Gastrocnemius medialis (tissue), 4 donors: ENCODE measurements at regions of chr12 and their contacts with region 1.

Region 1: GRCh38 chr12:51025836-51026638 is at the start of gene SLC11A2:
- DNase-seq: peak; percentile 97 to 98
- ATAC-seq: peak; percentile 74
- H3K4me3 ChIP-seq: peak within 1 kb of the TSS; percentile 72 to 97 (median 90)
- H3K27ac ChIP-seq: peak within 1 kb of the TSS; percentile 93 to 100 (median 97)
- H3K4me1 ChIP-seq: peaks cover 27 to 33% of the 10 kb centered on the region in 2 donors
- H3K27me3 ChIP-seq: no peaks in the 10 kb centered on the region
- CTCF ChIP-seq: peak in 2 of 5 experiments; percentile 6 to 27
- POLR2A ChIP-seq: peak; percentile 79 to 88
- total RNA-seq, gene SLC11A2: 24.0 to 65.4 (median 47.0) TPM

Region 2: GRCh38 chr12:49336645-49337584 is 1689.1 kb before region 1 on chr12 and contains the start of gene C1QL4:
- in situ Hi-C with region 1: no loop called
- intact Hi-C with region 1: no loop called
- DNase-seq: peak; percentile 34 to 55
- ATAC-seq: peak; percentile 82 to 85
- H3K4me3 ChIP-seq: peak within 1 kb of the TSS; percentile 35 to 62 (median 48)
- H3K27ac ChIP-seq: no peak within 1 kb of the TSS
- H3K4me1 ChIP-seq: peaks cover 0 to under 1% of the 10 kb centered on the region in 2 donors
- H3K27me3 ChIP-seq: peaks cover 53 to 71% (median 58%) of the 10 kb centered on the region in 3 donors
- CTCF ChIP-seq: peak; percentile 42 to 99 (median 76)
- POLR2A ChIP-seq: no peak
- total RNA-seq, gene C1QL4: not detected

Region 3: GRCh38 chr12:50825372-50825838 is 200.6 kb before region 1 on chr12:
- in situ Hi-C with region 1: no loop called
- intact Hi-C with region 1: loop called (anchors 1 kb)
- DNase-seq: no peak
- ATAC-seq: peak; percentile 83 to 86
- H3K4me3 ChIP-seq: no peak overlapping the region
- H3K27ac ChIP-seq: peak overlapping the region; percentile 62 to 74 (median 70)
- H3K4me1 ChIP-seq: peaks cover 0 to 14% of the 10 kb centered on the region in 2 donors
- H3K27me3 ChIP-seq: no peaks in the 10 kb centered on the region
- CTCF ChIP-seq: peak; percentile 53 to 86 (median 66)
- POLR2A ChIP-seq: no peak

Region 4: DNA sequence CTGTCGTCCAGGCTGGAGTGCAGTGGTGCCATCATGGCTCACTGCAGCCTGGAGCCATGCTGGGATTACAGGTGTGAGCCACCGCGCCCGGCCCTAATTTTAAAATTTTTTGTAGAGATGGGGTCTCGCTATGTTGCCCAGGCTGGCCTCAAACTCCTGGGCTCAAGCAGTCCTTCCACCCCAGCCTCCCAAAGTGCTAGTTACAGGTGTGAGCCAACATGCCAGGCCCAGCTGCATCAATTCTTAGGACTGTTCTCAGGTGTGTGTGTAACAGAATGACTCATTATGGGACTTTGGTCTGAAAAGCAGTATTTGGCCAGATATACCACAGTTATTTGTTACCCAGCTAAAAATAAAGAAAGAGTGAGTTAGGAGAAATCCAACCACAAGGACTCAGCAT is 39.5 kb after region 1 on chr12:
- in situ Hi-C with region 1: no loop called
- intact Hi-C with region 1: no loop called
- DNase-seq: no peak
- ATAC-seq: no peak
- H3K4me3 ChIP-seq: no peak overlapping the region
- H3K27ac ChIP-seq: no peak overlapping the region
- H3K4me1 ChIP-seq: peaks cover 0 to 6% of the 10 kb centered on the region in 2 donors
- H3K27me3 ChIP-seq: no peaks in the 10 kb centered on the region
- CTCF ChIP-seq: no peak
- POLR2A ChIP-seq: no peak

Region 5: DNA sequence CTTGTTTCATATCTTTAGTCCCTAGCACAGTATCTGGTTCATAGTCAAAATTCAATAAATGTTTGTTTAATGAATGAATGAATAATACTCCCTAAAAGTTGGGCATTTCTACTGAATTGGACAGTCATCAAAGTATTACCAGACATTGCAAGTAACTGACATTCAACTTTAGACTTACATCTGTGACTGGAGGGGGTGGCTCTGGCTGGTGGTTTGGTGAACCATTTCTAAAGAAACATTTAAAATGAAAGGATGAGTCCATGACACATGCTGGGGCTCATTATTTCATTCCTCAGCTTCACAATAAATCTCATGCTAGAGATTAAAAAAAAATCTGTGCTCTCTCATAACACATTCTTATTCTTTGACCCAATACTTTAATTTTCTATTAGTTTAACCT is 77.9 kb after region 1 on chr12:
- in situ Hi-C with region 1: no loop called
- intact Hi-C with region 1: no loop called
- DNase-seq: no peak
- ATAC-seq: no peak
- H3K4me3 ChIP-seq: no peak overlapping the region
- H3K27ac ChIP-seq: no peak overlapping the region
- H3K4me1 ChIP-seq: no peaks in the 10 kb centered on the region
- H3K27me3 ChIP-seq: no peaks in the 10 kb centered on the region
- CTCF ChIP-seq: no peak
- POLR2A ChIP-seq: no peak